Activated naive CD4-positive, alpha-beta T cell treated with anti-CD3 and anti-CD28 coated beads for 36 hours (primary cell): ENCODE measurements at regions of chr20 and their contacts with region 1.

Region 1: GRCh38 chr20:26276554-26277210 is 580.0 kb upstream of the ZNF337 start:
- DNase-seq: no peak
- H3K4me3 Mint-ChIP-seq: no peak overlapping the region
- H3K27ac Mint-ChIP-seq: no peak overlapping the region
- H3K4me1 Mint-ChIP-seq: peaks cover 42% of the 10 kb centered on the region
- H3K27me3 Mint-ChIP-seq: no peaks in the 10 kb centered on the region

Region 2: GRCh38 chr20:26295006-26295405 is 18.3 kb after region 1 on chr20:
- CTCF ChIA-PET with region 1: no interaction called
- intact Hi-C with region 1: loop called (anchors 2 kb)
- DNase-seq: no peak
- H3K4me3 Mint-ChIP-seq: no peak overlapping the region
- H3K27ac Mint-ChIP-seq: no peak overlapping the region
- H3K4me1 Mint-ChIP-seq: peaks cover 77% of the 10 kb centered on the region
- H3K27me3 Mint-ChIP-seq: no peaks in the 10 kb centered on the region